ENCODE measurements at regions of chr7 and their contacts with region 1.

Region 1: DNA sequence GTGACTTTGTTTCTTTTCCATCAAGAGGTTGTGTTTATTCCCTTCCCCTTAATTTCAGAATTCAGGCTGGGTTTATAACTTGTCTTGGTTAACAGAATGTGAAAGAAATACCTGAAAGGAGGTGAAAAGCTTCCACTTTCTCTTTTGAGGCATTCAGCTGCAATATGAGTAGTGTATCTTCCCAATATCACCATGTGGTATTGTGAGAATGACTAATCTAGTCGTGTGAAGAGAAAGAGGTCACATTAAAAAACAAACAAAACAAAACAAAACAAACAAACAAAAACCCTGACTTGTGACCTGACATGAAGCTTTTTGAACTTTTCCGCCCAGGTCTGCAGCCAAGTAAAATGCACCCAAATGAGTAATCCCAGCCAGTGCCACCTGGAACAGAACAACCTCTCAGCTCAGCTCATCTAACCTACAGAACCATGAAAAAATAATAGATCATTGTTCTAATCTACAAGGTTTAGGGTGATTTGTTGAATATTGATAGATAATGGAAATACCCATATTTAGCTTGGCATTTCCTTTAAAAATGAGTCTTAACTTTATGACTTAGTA is 70.8 kb upstream of the TEX47 start:
- DNase-seq: no peak
- ATAC-seq: no peak
- H3K4me3 ChIP-seq: no peak overlapping the region
- H3K27ac ChIP-seq: no peak overlapping the region
- H3K4me1 ChIP-seq: no peaks in the 10 kb centered on the region
- H3K27me3 ChIP-seq: no peaks in the 10 kb centered on the region
- CTCF ChIP-seq: no peak

Region 2: DNA sequence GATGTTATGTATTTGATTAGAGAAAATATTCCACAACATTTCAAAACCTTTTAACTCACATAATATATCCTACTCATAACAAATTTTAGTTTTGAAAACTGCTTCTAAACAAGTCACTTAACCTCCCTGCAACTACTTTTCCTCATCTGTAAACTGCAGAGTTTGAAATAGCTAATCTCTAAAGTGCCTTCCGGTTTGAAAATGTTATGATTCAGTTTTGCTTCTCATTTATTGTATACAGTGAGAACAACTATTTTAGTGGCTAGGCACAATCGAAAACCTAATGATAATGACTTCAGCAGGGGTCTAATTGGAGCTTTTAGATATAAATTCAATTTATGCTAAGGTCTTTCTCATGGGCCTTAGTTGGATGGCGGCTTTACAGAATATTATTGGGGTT is 40.2 kb before region 1 on chr7:
- intact Hi-C with region 1: no loop called
- DNase-seq: no peak
- ATAC-seq: no peak
- H3K4me3 ChIP-seq: no peak overlapping the region
- H3K27ac ChIP-seq: no peak overlapping the region
- H3K4me1 ChIP-seq: no peaks in the 10 kb centered on the region
- H3K27me3 ChIP-seq: no peaks in the 10 kb centered on the region
- CTCF ChIP-seq: no peak

Region 3: GRCh38 chr7:88888684-88889083 is 22.3 kb after region 1 on chr7:
- intact Hi-C with region 1: loop called in 1 of 10 experiments (anchors 1 kb)
- DNase-seq: no peak
- ATAC-seq: no peak
- H3K4me3 ChIP-seq: no peak overlapping the region
- H3K27ac ChIP-seq: no peak overlapping the region
- H3K4me1 ChIP-seq: no peaks in the 10 kb centered on the region
- H3K27me3 ChIP-seq: no peaks in the 10 kb centered on the region
- CTCF ChIP-seq: no peak

Measured in heart right ventricle (tissue), 16 donors.